AG04450 (cell line): ENCODE measurements at regions of chr1 and their contacts with region 1.

Region 1: GRCh38 chr1:94560333-94560732 is 18.8 kb upstream of the F3 start:
- DNase-seq: no peak
- H3K4me3 ChIP-seq: no peak overlapping the region
- H3K27ac ChIP-seq: peak overlapping the region; percentile 70
- H3K27me3 ChIP-seq: no peaks in the 10 kb centered on the region
- CTCF ChIP-seq: peak; percentile 42

Region 2: GRCh38 chr1:94608142-94608851 is 48.0 kb after region 1 on chr1:
- CTCF ChIA-PET with region 1: interaction called, 3 read pairs
- POLR2A ChIA-PET with region 1: interaction called, 13 read pairs
- DNase-seq: no peak
- H3K4me3 ChIP-seq: no peak overlapping the region
- H3K27ac ChIP-seq: no peak overlapping the region
- H3K27me3 ChIP-seq: no peaks in the 10 kb centered on the region
- CTCF ChIP-seq: no peak